PC-9 (cell line): ENCODE measurements at regions of chr6 and their contacts with region 1.

Region 1: GRCh38 chr6:14883921-14884320 is 361.9 kb upstream of the JARID2 start:
- DNase-seq: no peak
- H3K4me3 ChIP-seq: no peak overlapping the region
- H3K27ac ChIP-seq: no peak overlapping the region
- H3K4me1 ChIP-seq: peaks cover 34% of the 10 kb centered on the region
- H3K27me3 ChIP-seq: no peaks in the 10 kb centered on the region
- CTCF ChIP-seq: no peak

Region 2: DNA sequence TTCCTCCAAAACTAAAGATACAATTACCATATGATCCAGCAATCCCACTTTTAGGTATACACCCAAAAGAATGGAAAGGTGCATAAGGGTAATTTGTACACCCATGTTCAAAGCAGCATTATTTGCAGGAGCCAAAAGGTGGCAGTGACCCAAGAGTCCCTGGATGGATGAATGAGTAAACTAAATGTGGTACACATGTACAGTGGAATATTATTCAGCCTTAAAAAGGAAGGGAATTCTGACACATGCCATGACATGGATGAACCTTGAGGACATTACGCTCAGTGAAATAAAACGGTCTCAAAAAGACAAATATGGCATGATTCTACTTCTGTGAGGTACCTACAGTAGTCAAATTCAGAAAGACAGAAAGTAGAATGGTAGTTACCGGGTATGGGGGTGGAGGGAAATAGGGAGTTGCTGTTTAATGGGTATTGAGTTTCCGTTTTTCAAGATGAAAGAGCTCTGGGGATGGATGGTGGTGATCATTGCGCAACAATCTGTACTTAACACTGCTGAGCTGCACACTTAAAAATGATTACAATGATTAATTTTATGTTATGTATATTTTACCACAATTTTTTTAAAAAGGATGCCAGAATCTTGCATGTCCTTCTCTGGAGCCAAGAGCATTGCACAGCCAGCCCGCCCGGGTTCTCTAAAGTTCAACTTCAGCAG is 157.0 kb before region 1 on chr6:
- CTCF ChIA-PET with region 1: no interaction called
- POLR2A ChIA-PET with region 1: interaction called, 13 read pairs
- intact Hi-C with region 1: no loop called
- DNase-seq: no peak
- H3K4me3 ChIP-seq: no peak overlapping the region
- H3K27ac ChIP-seq: no peak overlapping the region
- H3K4me1 ChIP-seq: peaks cover 20% of the 10 kb centered on the region
- H3K27me3 ChIP-seq: no peaks in the 10 kb centered on the region
- CTCF ChIP-seq: no peak